MCF 10A (cell line): ENCODE measurements at regions of chr7 and their contacts with region 1.

Region 1: DNA sequence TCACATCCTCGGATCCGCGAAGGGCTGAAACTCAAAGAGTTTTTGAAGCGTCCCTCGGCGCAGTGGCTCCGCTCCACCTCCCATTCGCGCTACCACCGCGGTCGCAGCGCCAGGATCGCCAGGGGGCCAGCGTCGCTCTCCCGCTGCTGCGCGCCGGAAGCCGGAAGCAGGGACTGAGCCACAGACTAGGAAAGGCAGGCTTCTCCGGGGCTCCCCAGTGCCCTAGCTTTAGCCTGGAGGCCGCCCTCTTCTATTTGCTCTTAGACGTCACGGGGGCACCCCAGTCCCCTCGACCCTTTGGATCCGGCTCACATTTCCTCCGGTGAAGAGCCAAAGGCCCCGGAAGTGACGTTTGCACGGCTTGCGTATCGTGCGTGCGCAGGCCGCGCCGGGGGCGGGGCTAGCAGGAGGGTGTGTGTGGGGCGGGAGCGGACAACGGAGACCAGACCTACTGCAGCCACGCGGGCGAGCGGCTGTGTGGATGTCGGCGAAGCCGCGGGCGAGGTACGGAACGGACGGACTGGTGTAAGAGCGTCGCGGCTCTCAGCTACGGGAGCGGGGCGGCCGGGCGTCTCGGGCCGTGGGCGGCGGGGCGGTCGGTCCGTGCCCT is 25.5 kb downstream of the KCTD7 start:
- DNase-seq: peak; percentile 97
- H3K4me3 Mint-ChIP-seq: peak overlapping the region; percentile 88
- H3K27ac Mint-ChIP-seq: peak overlapping the region; percentile 97
- H3K4me1 Mint-ChIP-seq: peaks cover 13% of the 10 kb centered on the region
- H3K27me3 Mint-ChIP-seq: no peaks in the 10 kb centered on the region
- CTCF ChIP-seq: no peak

Region 2: DNA sequence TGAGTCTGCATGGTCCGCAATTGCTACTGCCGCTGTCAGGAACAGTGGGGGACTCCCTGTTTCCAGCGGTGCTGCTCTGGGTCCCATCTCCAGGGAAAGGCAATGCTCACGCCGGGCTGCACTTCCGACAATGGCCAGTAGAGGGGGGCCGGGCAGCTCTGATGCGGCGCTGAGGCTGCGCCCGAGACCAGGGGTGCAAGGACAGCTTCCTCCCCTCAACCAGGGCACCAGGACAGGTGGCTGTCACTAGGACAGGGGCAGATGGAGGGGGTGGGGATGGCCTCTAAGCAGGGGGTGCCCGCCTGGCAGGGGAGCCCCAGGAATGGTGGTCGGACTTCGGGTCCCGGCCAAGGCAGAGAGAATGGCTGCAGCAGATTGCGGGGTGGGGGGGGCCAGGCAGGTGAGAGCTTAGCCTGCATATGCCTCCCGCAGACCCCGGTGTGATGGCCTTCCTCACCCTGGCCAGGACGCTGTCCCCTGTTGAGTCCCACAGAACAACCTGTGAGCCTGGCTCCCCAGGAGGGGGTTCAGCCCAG is 96.6 kb before region 1 on chr7:
- CTCF ChIA-PET with region 1: interaction called, 4 read pairs
- POLR2A ChIA-PET with region 1: interaction called, 6 read pairs
- intact Hi-C with region 1: loop called (anchors 10 kb)
- DNase-seq: peak; percentile 47
- H3K4me3 Mint-ChIP-seq: no peak overlapping the region
- H3K27ac Mint-ChIP-seq: no peak overlapping the region
- H3K4me1 Mint-ChIP-seq: no peaks in the 10 kb centered on the region
- H3K27me3 Mint-ChIP-seq: no peaks in the 10 kb centered on the region
- CTCF ChIP-seq: peak; percentile 91

Region 3: DNA sequence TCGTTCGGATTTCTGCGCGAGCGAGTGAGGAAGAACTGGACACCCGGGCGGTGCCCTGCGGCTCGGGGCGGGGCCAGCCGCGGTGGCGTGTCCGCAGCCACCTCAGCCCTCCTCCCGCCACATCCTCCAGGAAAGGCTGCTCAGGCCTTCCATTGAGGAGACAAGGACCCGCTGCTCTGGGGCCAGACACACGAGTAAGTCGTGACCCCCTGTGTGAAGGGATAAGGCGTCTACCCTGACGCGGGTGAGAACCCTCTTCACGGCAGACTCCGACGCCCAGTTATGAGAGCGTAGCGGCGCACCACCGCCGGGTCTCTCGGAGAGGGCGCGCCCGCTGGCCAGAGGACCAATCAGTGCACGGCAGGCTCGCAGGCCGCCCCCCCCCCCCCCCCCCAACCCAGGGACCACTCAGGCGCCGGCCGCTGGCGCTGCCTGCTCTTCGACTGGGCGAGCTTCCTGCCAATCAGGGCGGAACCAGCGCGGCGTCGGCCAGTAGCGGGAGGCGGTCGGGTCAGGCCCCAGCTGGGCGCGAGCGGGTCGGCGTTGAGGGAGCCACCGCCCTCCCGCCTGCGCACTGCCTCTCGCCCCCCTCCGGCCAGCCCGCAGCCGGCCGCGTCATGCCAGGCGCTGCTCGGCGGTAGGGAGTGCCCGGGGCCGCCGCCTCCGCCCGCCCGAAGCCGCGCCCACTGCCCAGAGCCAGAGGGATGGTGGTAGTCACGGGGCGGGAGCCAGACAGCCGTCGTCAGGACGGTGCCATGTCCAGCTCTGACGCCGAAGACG is 25.7 kb before region 1 on chr7 and contains the start of gene KCTD7:
- CTCF ChIA-PET with region 1: interaction called, 4 read pairs
- POLR2A ChIA-PET with region 1: interaction called, 44 read pairs
- intact Hi-C with region 1: no loop called
- DNase-seq: peak; percentile 96
- H3K4me3 Mint-ChIP-seq: peak within 1 kb of the TSS; percentile 79
- H3K27ac Mint-ChIP-seq: peak within 1 kb of the TSS; percentile 84
- H3K4me1 Mint-ChIP-seq: peaks cover 16% of the 10 kb centered on the region
- H3K27me3 Mint-ChIP-seq: no peaks in the 10 kb centered on the region
- CTCF ChIP-seq: no peak
- total RNA-seq, gene KCTD7: 3.7 and 5.5 TPM in 2 replicates

Region 4: DNA sequence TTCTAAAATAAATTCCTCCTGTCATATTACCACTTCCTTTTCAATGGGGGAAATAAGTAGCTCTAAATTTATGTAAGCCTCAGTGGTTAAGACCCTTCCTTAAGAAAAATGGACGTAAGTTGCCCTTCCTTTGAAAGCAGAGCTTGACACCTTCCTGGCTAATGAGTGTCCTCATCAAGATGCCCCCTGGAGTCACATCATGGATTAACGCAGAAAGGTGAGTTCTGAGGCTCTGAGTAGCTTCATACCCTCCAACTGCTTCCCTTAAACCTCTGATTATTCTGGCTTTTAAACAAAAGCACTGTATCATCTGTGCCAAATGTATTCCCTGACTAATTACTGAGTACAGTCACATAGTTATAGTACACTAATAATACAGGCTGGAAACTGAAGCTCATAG is 10.8 kb before region 1 on chr7:
- CTCF ChIA-PET with region 1: interaction called, 3 read pairs
- POLR2A ChIA-PET with region 1: interaction called, 12 read pairs
- intact Hi-C with region 1: no loop called
- DNase-seq: no peak
- H3K4me3 Mint-ChIP-seq: no peak overlapping the region
- H3K27ac Mint-ChIP-seq: no peak overlapping the region
- H3K4me1 Mint-ChIP-seq: no peaks in the 10 kb centered on the region
- H3K27me3 Mint-ChIP-seq: no peaks in the 10 kb centered on the region
- CTCF ChIP-seq: no peak

Region 5: GRCh38 chr7:66681491-66682349 is 27.5 kb after region 1 on chr7:
- CTCF ChIA-PET with region 1: interaction called, 5 read pairs
- POLR2A ChIA-PET with region 1: interaction called, 56 read pairs
- intact Hi-C with region 1: loop called (anchors 1 kb)
- DNase-seq: peak; percentile 95
- H3K4me3 Mint-ChIP-seq: peak overlapping the region; percentile 85
- H3K27ac Mint-ChIP-seq: peak overlapping the region; percentile 95
- H3K4me1 Mint-ChIP-seq: peaks cover 10% of the 10 kb centered on the region
- H3K27me3 Mint-ChIP-seq: no peaks in the 10 kb centered on the region
- CTCF ChIP-seq: no peak